Panc1 (cell line): ENCODE measurements at regions of chr7 and their contacts with region 1.

Region 1: GRCh38 chr7:155598810-155599210 is 45.7 kb upstream of the RBM33 start:
- DNase-seq: peak; percentile 69
- ATAC-seq: peak; percentile 91
- H3K4me3 ChIP-seq: no peak overlapping the region
- H3K27ac ChIP-seq: no peak overlapping the region
- H3K4me1 ChIP-seq: no peaks in the 10 kb centered on the region; the same call in 1 of the 2 replicates
- H3K27me3 ChIP-seq: no peaks in the 10 kb centered on the region
- CTCF ChIP-seq: peak; percentile 95

Region 2: GRCh38 chr7:155729834-155730233 is 131.0 kb after region 1 on chr7:
- CTCF ChIA-PET with region 1: interaction called, 3 read pairs
- POLR2A ChIA-PET with region 1: interaction called, 11 read pairs
- in situ Hi-C with region 1: no loop called
- intact Hi-C with region 1: no loop called
- DNase-seq: no peak
- ATAC-seq: no peak
- H3K4me3 ChIP-seq: no peak overlapping the region
- H3K27ac ChIP-seq: no peak overlapping the region
- H3K4me1 ChIP-seq: no peaks in the 10 kb centered on the region
- H3K27me3 ChIP-seq: no peaks in the 10 kb centered on the region
- CTCF ChIP-seq: no peak